ENCODE measurements at regions of chr4 and their contacts with region 1.

Region 1: DNA sequence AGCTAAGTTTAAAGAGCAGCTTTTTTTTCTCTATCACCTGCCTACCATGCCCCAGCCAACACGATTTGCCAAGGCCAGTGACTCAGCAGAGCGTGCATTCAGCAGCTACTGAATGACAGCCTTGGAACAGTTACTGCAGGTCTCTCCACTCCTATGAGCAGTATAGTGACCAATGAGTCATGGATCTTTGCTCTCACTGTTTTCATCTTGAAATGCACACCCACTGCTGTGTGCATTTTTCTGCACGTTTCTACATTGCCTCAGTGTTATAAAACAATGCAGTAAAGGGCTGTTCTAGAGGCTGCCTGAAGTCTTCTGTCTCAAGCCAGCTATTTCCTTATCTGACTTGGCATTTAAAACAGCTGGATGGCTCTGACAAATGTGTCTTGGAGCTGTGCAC is 66.0 kb upstream of the C4orf54 start:
- DNase-seq: no peak
- H3K4me3 ChIP-seq: no peak overlapping the region
- H3K27ac ChIP-seq: no peak overlapping the region
- H3K4me1 ChIP-seq: peaks cover 0 to 4% of the 10 kb centered on the region in 2 experiments; a peak in 1 of 4 replicates
- H3K27me3 ChIP-seq: no peaks in the 10 kb centered on the region
- CTCF ChIP-seq: no peak
- EP300 ChIP-seq: no peak
- RAD21 ChIP-seq: no peak

Region 2: GRCh38 chr4:99808260-99808857 is 84.7 kb after region 1 on chr4:
- CTCF ChIA-PET with region 1: interaction called, 25 read pairs
- POLR2A ChIA-PET with region 1: no interaction called
- DNase-seq: peak; percentile 57
- H3K4me3 ChIP-seq: no peak overlapping the region
- H3K27ac ChIP-seq: no peak overlapping the region
- H3K4me1 ChIP-seq: no peaks in the 10 kb centered on the region
- H3K27me3 ChIP-seq: peaks cover 14% of the 10 kb centered on the region; the same call in 1 of the 2 replicates
- CTCF ChIP-seq: peak; percentile 71
- EP300 ChIP-seq: no peak
- RAD21 ChIP-seq: peak; percentile 81

Region 3: GRCh38 chr4:99821918-99822503 is 98.4 kb after region 1 on chr4:
- CTCF ChIA-PET with region 1: no interaction called
- POLR2A ChIA-PET with region 1: no interaction called
- DNase-seq: no peak
- H3K4me3 ChIP-seq: no peak overlapping the region
- H3K27ac ChIP-seq: no peak overlapping the region
- H3K4me1 ChIP-seq: no peaks in the 10 kb centered on the region; a peak in 1 of 4 replicates
- H3K27me3 ChIP-seq: no peaks in the 10 kb centered on the region
- CTCF ChIP-seq: no peak
- EP300 ChIP-seq: no peak
- RAD21 ChIP-seq: no peak

Region 4: DNA sequence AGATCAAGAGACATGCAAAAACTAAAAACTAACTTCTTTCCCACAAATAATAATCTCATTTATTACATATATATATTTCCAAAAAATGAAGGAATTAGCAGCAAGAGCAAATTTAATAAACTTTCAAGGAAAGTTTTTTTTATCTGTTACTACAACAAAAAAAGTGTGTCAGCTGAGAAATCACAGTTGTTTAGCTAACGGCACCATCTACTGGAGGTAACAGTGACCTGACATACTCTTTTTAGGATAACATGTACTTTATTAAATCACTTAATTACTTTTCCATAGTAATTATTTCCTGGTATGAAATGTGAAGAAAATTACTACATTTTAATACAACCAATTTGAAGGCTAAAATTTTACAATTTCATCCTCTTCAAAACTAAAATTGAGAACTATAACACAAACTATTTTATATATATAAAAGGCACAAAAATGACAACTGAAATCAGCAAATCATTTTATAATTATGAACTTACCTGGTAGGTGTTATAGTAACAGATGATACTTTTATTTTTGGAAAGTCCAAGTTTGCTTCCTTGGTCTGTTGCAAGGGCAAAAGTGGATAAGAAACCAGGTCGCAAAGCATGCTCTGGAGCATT is 161.6 kb after region 1 on chr4:
- CTCF ChIA-PET with region 1: interaction called, 12 read pairs
- POLR2A ChIA-PET with region 1: no interaction called
- DNase-seq: peak; percentile 23
- H3K4me3 ChIP-seq: no peak overlapping the region
- H3K27ac ChIP-seq: peak overlapping the region in 1 of 2 experiments; percentile 29; a peak in 1 of 4 replicates
- H3K4me1 ChIP-seq: no peaks in the 10 kb centered on the region
- H3K27me3 ChIP-seq: no peaks in the 10 kb centered on the region
- CTCF ChIP-seq: peak; percentile 79
- EP300 ChIP-seq: no peak
- RAD21 ChIP-seq: peak; percentile 82

Measured in SK-N-SH (cell line).